Endothelial cell of umbilical vein (primary cell): ENCODE measurements at regions of chr12 and their contacts with region 1.

Region 1: DNA sequence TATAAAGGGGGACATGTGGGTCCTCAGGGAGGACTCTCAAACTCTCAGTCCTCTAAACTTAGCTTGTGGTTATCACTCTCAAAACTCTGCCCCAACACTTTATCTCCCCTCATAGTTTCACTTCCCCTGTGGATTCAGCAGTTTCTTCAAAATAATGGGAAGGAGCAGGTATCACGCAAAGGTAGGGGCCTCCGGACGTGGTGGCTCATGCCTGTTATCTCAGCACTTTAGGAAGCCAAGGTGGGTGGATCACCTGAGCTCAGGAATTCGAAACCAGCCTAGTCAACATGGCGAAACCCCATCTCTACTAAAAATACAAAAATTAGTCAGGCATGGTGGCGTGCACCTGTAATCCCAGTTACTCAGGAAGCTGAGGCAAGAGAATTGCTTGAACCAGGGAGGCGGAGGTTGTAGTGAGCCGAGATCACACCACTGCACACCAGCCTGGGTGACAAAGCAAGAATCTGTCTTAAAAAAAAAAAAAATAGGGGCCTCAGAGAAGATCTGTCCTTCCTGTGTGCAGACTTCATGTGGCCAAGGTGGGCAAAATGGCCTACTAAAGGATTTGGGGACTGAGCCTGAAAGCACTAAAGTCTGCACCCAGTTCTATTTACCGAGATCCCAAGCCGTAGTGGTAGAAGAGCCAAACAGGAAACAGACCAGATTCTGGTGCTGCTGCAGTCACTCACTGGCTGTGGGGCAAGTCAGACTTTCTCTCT is 6.4 kb downstream of the ITGB7 start:
- DNase-seq: no peak
- H3K4me3 ChIP-seq: no peak overlapping the region
- H3K27ac ChIP-seq: no peak overlapping the region
- H3K4me1 ChIP-seq: peaks cover 6% of the 10 kb centered on the region
- H3K27me3 ChIP-seq: peaks cover 0 to 2% of the 10 kb centered on the region in 2 experiments
- CTCF ChIP-seq: no peak
- POLR2A ChIP-seq: no peak

Region 2: GRCh38 chr12:53071591-53072551 is 128.7 kb before region 1 on chr12:
- CTCF ChIA-PET with region 1: interaction called, 170 read pairs
- POLR2A ChIA-PET with region 1: no interaction called
- dilution Hi-C with region 1: no loop called
- intact Hi-C with region 1: no loop called
- DNase-seq: peak; percentile 35
- H3K4me3 ChIP-seq: no peak overlapping the region
- H3K27ac ChIP-seq: no peak overlapping the region
- H3K4me1 ChIP-seq: peaks cover 29% of the 10 kb centered on the region
- H3K27me3 ChIP-seq: no peaks in the 10 kb centered on the region
- CTCF ChIP-seq: peak in 1 of 2 donors; percentile 26
- POLR2A ChIP-seq: no peak

Region 3: DNA sequence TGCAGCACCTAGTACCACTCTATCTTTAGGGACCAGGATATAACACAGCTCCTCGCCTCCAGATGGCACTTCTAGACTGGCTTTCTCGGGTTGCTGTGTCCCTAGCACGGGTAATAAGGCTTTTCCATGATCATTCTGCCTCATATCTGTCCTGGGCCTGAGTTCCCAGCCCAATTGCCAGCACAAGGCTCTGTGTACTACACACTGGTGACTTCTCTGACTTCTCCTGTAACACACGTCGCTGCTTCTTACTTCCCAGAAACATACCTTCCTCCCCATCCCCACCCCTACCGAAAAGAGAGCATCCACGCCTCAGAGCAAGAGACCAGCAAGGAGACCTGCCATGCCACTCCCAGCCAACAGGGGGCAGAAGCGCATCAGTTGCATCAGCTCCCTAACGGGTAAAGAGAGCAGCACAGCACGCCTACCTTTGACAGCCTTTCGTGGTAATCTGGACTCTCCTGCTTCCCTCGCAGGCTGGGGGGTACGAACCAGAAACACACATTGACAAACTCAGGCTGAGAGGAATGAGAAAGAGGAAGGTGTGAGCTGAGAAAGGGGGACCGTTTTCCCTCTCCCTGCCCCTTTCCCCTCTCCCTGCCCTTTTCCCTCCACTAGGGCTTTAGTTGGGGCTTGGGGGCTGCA is 41.3 kb before region 1 on chr12:
- CTCF ChIA-PET with region 1: interaction called, 249 read pairs
- POLR2A ChIA-PET with region 1: no interaction called
- dilution Hi-C with region 1: no loop called
- intact Hi-C with region 1: loop called (anchors 1 kb)
- DNase-seq: peak; percentile 66
- H3K4me3 ChIP-seq: no peak overlapping the region
- H3K27ac ChIP-seq: no peak overlapping the region
- H3K4me1 ChIP-seq: no peaks in the 10 kb centered on the region
- H3K27me3 ChIP-seq: no peaks in the 10 kb centered on the region
- CTCF ChIP-seq: peak; percentile 98 to 99
- POLR2A ChIP-seq: no peak

Region 4: DNA sequence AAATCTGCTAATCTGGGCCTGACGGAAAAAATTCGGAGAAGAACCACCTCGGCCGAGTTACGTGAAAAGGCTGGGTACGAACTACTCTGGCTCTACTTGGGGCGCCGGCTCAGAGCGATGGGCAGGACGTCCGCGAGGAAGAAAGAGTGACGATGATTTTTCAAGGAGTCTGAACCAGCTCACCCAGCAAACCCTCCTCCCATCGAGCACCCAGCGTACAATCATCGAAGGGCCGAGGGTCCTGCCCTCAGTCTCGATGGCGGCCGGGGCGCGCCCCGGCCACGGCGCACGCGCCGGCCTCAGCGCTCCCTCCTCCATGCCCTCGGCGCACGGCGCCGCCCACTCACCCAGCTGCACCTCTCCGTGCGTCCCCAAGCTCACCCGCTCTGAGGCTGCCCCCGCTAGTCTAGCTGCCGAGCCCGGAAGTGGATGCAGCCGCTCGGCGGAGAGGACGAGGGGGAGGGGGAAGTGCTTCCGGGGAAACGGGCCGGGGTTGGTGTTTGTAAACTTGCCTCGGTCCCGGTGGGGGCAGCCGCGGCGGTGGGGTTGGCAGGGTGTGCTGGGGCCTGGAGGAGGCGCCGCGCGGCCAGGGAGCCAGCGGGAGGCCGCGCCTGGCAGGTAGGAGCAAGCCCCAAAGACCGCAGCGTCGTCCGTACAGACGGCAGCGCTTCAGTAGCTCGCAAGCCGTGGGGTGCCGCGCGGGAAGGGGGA is 20.2 kb before region 1 on chr12 and contains the starts of genes CSAD and ZNF740:
- CTCF ChIA-PET with region 1: interaction called, 30 read pairs
- POLR2A ChIA-PET with region 1: no interaction called
- dilution Hi-C with region 1: no loop called
- intact Hi-C with region 1: no loop called
- DNase-seq: peak; percentile 96
- H3K4me3 ChIP-seq: peak within 1 kb of the TSS; percentile 60 to 91 (median 73)
- H3K27ac ChIP-seq: peak within 1 kb of the TSS; percentile 50
- H3K4me1 ChIP-seq: peaks cover 22% of the 10 kb centered on the region
- H3K27me3 ChIP-seq: no peaks in the 10 kb centered on the region
- CTCF ChIP-seq: no peak
- POLR2A ChIP-seq: peak; percentile 87
- total RNA-seq, gene CSAD: 21.1 and 22.0 TPM in 2 replicates
- total RNA-seq, gene ZNF740: 34.9 and 38.1 TPM in 2 replicates

Region 5: GRCh38 chr12:53267999-53268647 is 67.5 kb after region 1 on chr12 and contains the start of gene ESPL1:
- CTCF ChIA-PET with region 1: interaction called, 17 read pairs
- POLR2A ChIA-PET with region 1: no interaction called
- dilution Hi-C with region 1: no loop called
- intact Hi-C with region 1: no loop called
- DNase-seq: peak; percentile 82
- H3K4me3 ChIP-seq: peak within 1 kb of the TSS; percentile 61 to 85 (median 77)
- H3K27ac ChIP-seq: no peak within 1 kb of the TSS
- H3K4me1 ChIP-seq: peaks cover 24% of the 10 kb centered on the region
- H3K27me3 ChIP-seq: no peaks in the 10 kb centered on the region
- CTCF ChIP-seq: peak; percentile 35 to 51
- POLR2A ChIP-seq: peak; percentile 15
- total RNA-seq, gene ESPL1: 39.3 and 42.7 TPM in 2 replicates